GM12878 (cell line): ENCODE measurements at regions of chr9 and their contacts with region 1.

Region 1: DNA sequence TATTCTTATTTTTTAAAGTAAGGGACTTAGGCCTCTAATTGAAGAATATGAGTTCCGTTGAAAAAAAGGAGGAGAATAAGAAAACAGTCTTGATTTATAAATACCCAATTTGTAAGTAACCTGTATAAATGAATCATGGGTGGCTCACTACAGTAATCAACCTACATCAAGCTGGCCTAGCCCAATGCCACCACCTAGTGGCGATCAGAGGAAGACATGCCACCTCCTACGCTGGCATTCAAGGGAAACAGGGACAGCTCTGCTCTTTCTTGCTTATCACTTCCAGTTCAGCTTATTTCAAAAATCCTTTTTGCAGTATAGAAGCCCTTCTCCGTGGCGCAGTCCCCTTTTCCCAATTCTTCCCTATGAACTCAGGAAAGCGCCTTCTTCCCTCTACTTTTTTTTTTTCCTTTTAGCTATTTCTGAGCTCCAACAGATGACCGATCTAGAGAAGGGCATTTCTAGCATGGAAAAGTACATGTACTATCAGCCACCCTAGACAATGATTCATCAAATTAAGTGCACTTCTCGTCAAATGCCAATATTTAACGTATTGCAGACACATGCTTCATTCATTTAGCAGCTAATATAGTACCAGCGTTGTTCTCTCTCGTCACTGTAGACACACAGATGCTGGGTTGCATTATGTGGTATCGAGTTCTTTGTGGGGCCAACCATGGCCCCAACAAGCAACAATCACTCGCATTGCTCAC is 28.3 kb downstream of the PTPN3 start:
- DNase-seq: peak; percentile 30
- ATAC-seq: peak; percentile 99
- H3K4me3 ChIP-seq: no peak overlapping the region
- H3K27ac ChIP-seq: no peak overlapping the region
- H3K4me1 ChIP-seq: no peaks in the 10 kb centered on the region
- H3K27me3 ChIP-seq: no peaks in the 10 kb centered on the region
- CTCF ChIP-seq: peak; percentile 92 to 96 (median 94); a peak in 5 of 6 replicates
- EP300 ChIP-seq: no peak
- POLR2A ChIP-seq: no peak
- RAD21 ChIP-seq: peak; percentile 98

Region 2: DNA sequence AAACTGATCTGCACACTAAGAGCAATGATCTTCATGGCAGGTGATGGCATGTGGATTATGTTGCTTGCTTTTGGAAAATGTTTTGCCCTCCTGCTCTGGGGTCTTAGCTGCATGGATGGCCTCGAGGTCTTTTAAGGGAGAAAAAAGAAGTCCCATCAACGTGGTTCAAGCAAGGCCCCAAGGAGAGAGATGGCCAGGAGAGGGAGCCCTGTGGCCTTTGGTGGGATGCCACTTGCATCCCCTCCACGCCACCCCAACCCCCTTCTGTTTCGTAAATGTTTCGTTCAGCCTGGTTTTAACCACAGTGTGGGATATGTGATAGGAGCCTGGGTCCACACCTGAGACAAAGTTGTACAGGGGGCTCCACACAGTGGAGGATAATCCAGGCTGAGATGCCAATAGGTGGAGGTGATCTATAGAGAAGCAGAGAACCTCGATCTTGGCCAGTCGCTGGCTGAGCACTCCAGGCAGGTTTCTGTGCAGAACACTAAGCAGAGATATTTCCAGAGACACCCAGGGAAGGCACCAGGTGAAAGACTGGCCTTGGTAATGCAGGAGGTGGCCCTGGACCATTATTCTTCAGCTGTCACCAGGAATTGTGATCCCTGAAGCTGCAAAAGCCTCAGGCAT is 277.0 kb before region 1 on chr9:
- CTCF ChIA-PET with region 1: interaction called, 8 read pairs
- POLR2A ChIA-PET with region 1: no interaction called
- RAD21 ChIA-PET with region 1: interaction called, 3 read pairs
- SMC1A ChIA-PET with region 1: interaction called, 5 read pairs
- in situ Hi-C with region 1: no loop called
- intact Hi-C with region 1: loop called (anchors 2 kb)
- DNase-seq: no peak
- ATAC-seq: peak; percentile 54
- H3K4me3 ChIP-seq: no peak overlapping the region
- H3K27ac ChIP-seq: no peak overlapping the region
- H3K4me1 ChIP-seq: no peaks in the 10 kb centered on the region
- H3K27me3 ChIP-seq: no peaks in the 10 kb centered on the region
- CTCF ChIP-seq: peak; percentile 27 to 35 (median 33); a peak in 2 of 6 replicates
- EP300 ChIP-seq: no peak
- POLR2A ChIP-seq: no peak
- RAD21 ChIP-seq: peak; percentile 35; the same call in 1 of the 2 replicates

Region 3: GRCh38 chr9:109341565-109341964 is 128.2 kb before region 1 on chr9:
- CTCF ChIA-PET with region 1: interaction called, 5 read pairs
- POLR2A ChIA-PET with region 1: no interaction called
- RAD21 ChIA-PET with region 1: interaction called, 4 read pairs
- SMC1A ChIA-PET with region 1: interaction called, 5 read pairs
- in situ Hi-C with region 1: no loop called
- intact Hi-C with region 1: loop called (anchors 5 kb)
- DNase-seq: no peak
- ATAC-seq: no peak
- H3K4me3 ChIP-seq: no peak overlapping the region
- H3K27ac ChIP-seq: no peak overlapping the region
- H3K4me1 ChIP-seq: no peaks in the 10 kb centered on the region
- H3K27me3 ChIP-seq: no peaks in the 10 kb centered on the region; a peak in 1 of 4 replicates
- CTCF ChIP-seq: no peak
- EP300 ChIP-seq: no peak
- POLR2A ChIP-seq: no peak
- RAD21 ChIP-seq: no peak

Region 4: GRCh38 chr9:109411798-109412352 is 57.9 kb before region 1 on chr9:
- CTCF ChIA-PET with region 1: interaction called, 72 read pairs
- POLR2A ChIA-PET with region 1: interaction called, 3 read pairs
- RAD21 ChIA-PET with region 1: interaction called, 9 read pairs
- SMC1A ChIA-PET with region 1: interaction called, 19 read pairs
- in situ Hi-C with region 1: no loop called
- intact Hi-C with region 1: loop called (anchors 5 kb)
- DNase-seq: peak; percentile 75
- ATAC-seq: peak; percentile 55
- H3K4me3 ChIP-seq: no peak overlapping the region
- H3K27ac ChIP-seq: peak overlapping the region; percentile 77
- H3K4me1 ChIP-seq: peaks cover 52% of the 10 kb centered on the region
- H3K27me3 ChIP-seq: no peaks in the 10 kb centered on the region
- CTCF ChIP-seq: peak; percentile 94 to 97 (median 97); a peak in 5 of 6 replicates
- EP300 ChIP-seq: peak; percentile 92 to 96
- POLR2A ChIP-seq: no peak
- RAD21 ChIP-seq: peak; percentile 88

Region 5: GRCh38 chr9:109448223-109448622 is 21.6 kb before region 1 on chr9:
- CTCF ChIA-PET with region 1: interaction called, 234 read pairs
- POLR2A ChIA-PET with region 1: interaction called, 5 read pairs
- RAD21 ChIA-PET with region 1: interaction called, 135 read pairs
- SMC1A ChIA-PET with region 1: interaction called, 131 read pairs
- in situ Hi-C with region 1: no loop called
- intact Hi-C with region 1: no loop called
- DNase-seq: no peak
- ATAC-seq: no peak
- H3K4me3 ChIP-seq: no peak overlapping the region
- H3K27ac ChIP-seq: no peak overlapping the region
- H3K4me1 ChIP-seq: no peaks in the 10 kb centered on the region
- H3K27me3 ChIP-seq: no peaks in the 10 kb centered on the region
- CTCF ChIP-seq: no peak
- EP300 ChIP-seq: no peak
- POLR2A ChIP-seq: no peak
- RAD21 ChIP-seq: no peak

Region 6: GRCh38 chr9:109520478-109521132 is 50.8 kb after region 1 on chr9:
- CTCF ChIA-PET with region 1: interaction called, 10 read pairs
- POLR2A ChIA-PET with region 1: no interaction called
- RAD21 ChIA-PET with region 1: interaction called, 4 read pairs
- SMC1A ChIA-PET with region 1: interaction called, 7 read pairs
- in situ Hi-C with region 1: no loop called
- intact Hi-C with region 1: no loop called
- DNase-seq: peak; percentile 27
- ATAC-seq: peak; percentile 98
- H3K4me3 ChIP-seq: no peak overlapping the region
- H3K27ac ChIP-seq: no peak overlapping the region
- H3K4me1 ChIP-seq: no peaks in the 10 kb centered on the region
- H3K27me3 ChIP-seq: no peaks in the 10 kb centered on the region; a peak in 2 of 4 replicates
- CTCF ChIP-seq: peak; percentile 90 to 93 (median 90)
- EP300 ChIP-seq: no peak
- POLR2A ChIP-seq: no peak
- RAD21 ChIP-seq: peak; percentile 86

Region 7: DNA sequence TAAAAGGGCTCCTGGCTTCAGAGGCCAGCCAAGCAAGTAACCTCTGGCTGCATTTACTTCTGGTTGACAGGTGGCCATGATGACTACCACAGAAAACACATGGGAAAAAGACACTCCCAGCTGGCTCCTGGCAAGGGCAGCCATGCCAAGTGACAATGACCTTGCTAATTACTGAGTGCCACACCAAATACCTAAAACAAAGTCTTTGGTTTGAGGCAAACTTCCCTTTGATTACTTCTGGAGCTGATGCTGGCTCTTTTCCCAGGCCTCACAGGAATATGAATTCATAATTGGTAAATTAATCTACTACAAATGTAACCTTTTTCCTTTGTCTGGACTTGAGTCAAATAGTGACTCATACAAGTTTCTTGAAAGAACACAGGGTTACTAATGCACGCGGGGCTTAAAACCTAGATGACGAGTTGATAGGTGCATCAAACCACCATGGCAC is 1507.5 kb after region 1 on chr9:
- CTCF ChIA-PET with region 1: no interaction called
- POLR2A ChIA-PET with region 1: no interaction called
- RAD21 ChIA-PET with region 1: no interaction called
- SMC1A ChIA-PET with region 1: no interaction called
- in situ Hi-C with region 1: no loop called
- intact Hi-C with region 1: no loop called
- DNase-seq: no peak
- ATAC-seq: peak; percentile 29
- H3K4me3 ChIP-seq: no peak overlapping the region
- H3K27ac ChIP-seq: no peak overlapping the region
- H3K4me1 ChIP-seq: no peaks in the 10 kb centered on the region
- H3K27me3 ChIP-seq: no peaks in the 10 kb centered on the region
- CTCF ChIP-seq: no peak
- EP300 ChIP-seq: no peak
- POLR2A ChIP-seq: no peak
- RAD21 ChIP-seq: no peak